CD4-positive, alpha-beta memory T cell (primary cell): ENCODE measurements at regions of chr1 and their contacts with region 1.

Region 1: GRCh38 chr1:235415008-235415904 is 48.0 kb downstream of the TBCE start:
- DNase-seq: peak; percentile 53 to 64 (median 61)
- H3K4me3 ChIP-seq: no peak overlapping the region
- H3K4me3 Mint-ChIP-seq: no peak overlapping the region
- H3K27ac ChIP-seq: no peak overlapping the region
- H3K27ac Mint-ChIP-seq: peak overlapping the region in 1 of 7 donors; percentile 8
- H3K4me1 ChIP-seq: no peaks in the 10 kb centered on the region
- H3K4me1 Mint-ChIP-seq: peaks cover 6 to 11% (median 9%) of the 10 kb centered on the region in 4 donors
- H3K27me3 ChIP-seq: no peaks in the 10 kb centered on the region
- H3K27me3 Mint-ChIP-seq: no peaks in the 10 kb centered on the region

Region 2: GRCh38 chr1:234486498-234487448 is 928.5 kb before region 1 on chr1:
- CTCF ChIA-PET with region 1: interaction called, 14 read pairs
- POLR2A ChIA-PET with region 1: no interaction called
- intact Hi-C with region 1: no loop called
- DNase-seq: peak in 2 of 5 donors; percentile 13 to 20
- H3K4me3 ChIP-seq: no peak overlapping the region
- H3K4me3 Mint-ChIP-seq: peak overlapping the region in 3 of 8 donors; percentile 18 to 31 (median 20)
- H3K27ac ChIP-seq: no peak overlapping the region
- H3K27ac Mint-ChIP-seq: peak overlapping the region in 1 of 7 donors; percentile 22
- H3K4me1 ChIP-seq: peaks cover 10% of the 10 kb centered on the region
- H3K4me1 Mint-ChIP-seq: peaks cover 5 to 23% (median 6%) of the 10 kb centered on the region in 4 donors
- H3K27me3 ChIP-seq: no peaks in the 10 kb centered on the region
- H3K27me3 Mint-ChIP-seq: peaks cover 5 to 13% of the 10 kb centered on the region in 2 donors

Region 3: GRCh38 chr1:235093696-235094592 is 321.3 kb before region 1 on chr1:
- CTCF ChIA-PET with region 1: interaction called, 96 read pairs
- POLR2A ChIA-PET with region 1: no interaction called
- intact Hi-C with region 1: loop called (anchors 1 kb)
- DNase-seq: peak; percentile 77 to 80 (median 79)
- H3K4me3 ChIP-seq: no peak overlapping the region
- H3K4me3 Mint-ChIP-seq: peak overlapping the region in 1 of 8 donors; percentile 39
- H3K27ac ChIP-seq: no peak overlapping the region
- H3K27ac Mint-ChIP-seq: peak overlapping the region in 3 of 7 donors; percentile 14 to 71 (median 29)
- H3K4me1 ChIP-seq: peaks cover 9% of the 10 kb centered on the region
- H3K4me1 Mint-ChIP-seq: peaks cover 6 to 10% (median 7%) of the 10 kb centered on the region in 4 donors
- H3K27me3 ChIP-seq: no peaks in the 10 kb centered on the region
- H3K27me3 Mint-ChIP-seq: peaks cover 0 to 5% of the 10 kb centered on the region in 2 donors

Region 4: DNA sequence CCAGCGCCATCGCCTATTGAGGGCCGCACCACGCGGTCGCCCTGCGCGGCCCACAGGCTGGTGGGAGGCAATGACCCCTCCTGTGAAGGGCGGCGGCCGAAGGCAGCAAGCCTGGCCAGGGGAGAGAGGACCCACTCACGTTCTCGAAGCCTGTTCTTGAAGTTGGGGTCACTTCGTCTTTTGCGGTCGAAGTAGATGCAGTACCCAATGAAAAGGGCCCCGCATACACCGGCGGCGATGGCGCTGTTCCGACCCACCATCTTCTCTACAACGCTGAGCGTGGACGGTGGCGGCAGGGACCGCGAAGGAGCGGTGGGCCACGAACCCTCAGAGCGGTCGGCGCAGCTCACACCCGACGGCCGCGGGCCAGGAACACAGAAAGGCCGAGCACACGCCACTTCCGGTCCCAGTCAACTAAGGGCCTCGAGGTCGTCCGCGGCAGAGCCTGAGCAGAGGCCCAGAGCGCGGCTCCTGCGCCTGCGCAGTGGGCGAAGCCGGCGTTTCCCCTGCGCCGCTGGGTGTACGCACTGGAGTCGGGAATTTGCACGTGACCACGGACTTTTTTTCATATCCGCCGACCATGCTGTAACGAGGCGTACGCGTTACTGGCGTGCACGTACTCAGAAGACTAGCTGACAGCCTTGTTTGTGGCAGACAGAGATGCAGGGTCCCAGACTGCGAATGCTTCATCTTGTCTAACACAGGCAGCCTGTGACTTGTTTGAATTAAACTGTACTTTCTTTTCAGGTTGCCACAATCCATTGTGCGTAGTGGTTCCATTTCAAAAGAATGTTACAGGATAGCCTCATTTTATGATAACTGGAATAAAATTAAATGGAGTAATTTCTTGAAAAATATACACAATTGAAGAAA is 286.6 kb before region 1 on chr1 and contains the start of gene TOMM20:
- CTCF ChIA-PET with region 1: interaction called, 13 read pairs
- POLR2A ChIA-PET with region 1: interaction called, 3 read pairs
- intact Hi-C with region 1: no loop called
- DNase-seq: peak; percentile 95 to 97 (median 96)
- H3K4me3 ChIP-seq: peak within 1 kb of the TSS; percentile 64 to 83
- H3K4me3 Mint-ChIP-seq: peak within 1 kb of the TSS; percentile 89 to 98 (median 97)
- H3K27ac ChIP-seq: peak within 1 kb of the TSS; percentile 94
- H3K27ac Mint-ChIP-seq: peak within 1 kb of the TSS; percentile 95 to 99 (median 97)
- H3K4me1 ChIP-seq: peaks cover 41% of the 10 kb centered on the region
- H3K4me1 Mint-ChIP-seq: peaks cover 19 to 51% (median 32%) of the 10 kb centered on the region in 4 donors
- H3K27me3 ChIP-seq: no peaks in the 10 kb centered on the region
- H3K27me3 Mint-ChIP-seq: no peaks in the 10 kb centered on the region
- total RNA-seq, gene TOMM20: 102 to 108 TPM

Region 5: GRCh38 chr1:235206533-235207208 is 208.6 kb before region 1 on chr1:
- CTCF ChIA-PET with region 1: interaction called, 10 read pairs
- POLR2A ChIA-PET with region 1: no interaction called
- intact Hi-C with region 1: no loop called
- DNase-seq: peak in 3 of 5 donors; percentile 4 to 52 (median 20)
- H3K4me3 ChIP-seq: no peak overlapping the region
- H3K4me3 Mint-ChIP-seq: peak overlapping the region in 7 of 8 donors; percentile 1 to 67 (median 59)
- H3K27ac ChIP-seq: peak overlapping the region; percentile 20
- H3K27ac Mint-ChIP-seq: peak overlapping the region; percentile 25 to 91 (median 65)
- H3K4me1 ChIP-seq: peaks cover 19% of the 10 kb centered on the region
- H3K4me1 Mint-ChIP-seq: peaks cover 19 to 31% (median 25%) of the 10 kb centered on the region in 4 donors
- H3K27me3 ChIP-seq: no peaks in the 10 kb centered on the region
- H3K27me3 Mint-ChIP-seq: no peaks in the 10 kb centered on the region

Region 6: DNA sequence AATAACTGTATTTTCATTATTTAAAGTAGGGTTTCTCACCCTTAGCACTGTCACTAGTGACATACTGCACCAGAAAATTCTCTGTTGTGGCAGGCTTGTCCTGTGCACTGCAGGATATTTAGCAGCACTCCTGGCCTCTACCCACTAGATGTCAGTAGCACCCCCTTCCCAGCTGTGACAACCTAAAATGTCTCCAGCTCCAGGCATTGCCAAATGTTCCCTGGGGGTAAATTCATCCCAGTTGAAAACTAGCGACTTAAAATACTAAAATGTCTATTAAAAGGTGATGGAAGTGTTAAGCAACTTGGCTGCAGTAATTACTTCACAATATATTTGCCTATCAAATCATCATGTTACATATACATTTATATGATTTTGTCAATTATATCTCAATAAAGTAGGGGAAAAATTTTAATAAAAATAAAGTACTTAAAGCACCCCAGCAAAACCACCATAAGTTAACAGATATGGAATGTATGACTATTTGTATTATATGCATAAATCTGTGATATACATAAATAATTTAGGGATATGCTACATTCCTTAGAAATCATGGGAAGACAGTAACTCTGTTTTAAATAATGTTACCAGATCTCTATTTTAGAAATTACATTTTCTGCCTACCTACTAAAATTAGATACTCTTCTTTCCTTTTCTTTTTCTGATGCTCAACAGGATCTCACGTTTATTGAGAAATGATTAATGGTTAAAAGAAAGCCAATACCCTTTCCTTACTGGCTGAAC is 161.9 kb before region 1 on chr1:
- CTCF ChIA-PET with region 1: interaction called, 130 read pairs
- POLR2A ChIA-PET with region 1: interaction called, 9 read pairs
- intact Hi-C with region 1: loop called (anchors 1 kb)
- DNase-seq: peak; percentile 58 to 71 (median 66)
- H3K4me3 ChIP-seq: no peak overlapping the region
- H3K4me3 Mint-ChIP-seq: no peak overlapping the region
- H3K27ac ChIP-seq: no peak overlapping the region
- H3K27ac Mint-ChIP-seq: peak overlapping the region; percentile 35 to 86 (median 70)
- H3K4me1 ChIP-seq: peaks cover 36% of the 10 kb centered on the region
- H3K4me1 Mint-ChIP-seq: peaks cover 24 to 46% (median 30%) of the 10 kb centered on the region in 4 donors
- H3K27me3 ChIP-seq: no peaks in the 10 kb centered on the region
- H3K27me3 Mint-ChIP-seq: no peaks in the 10 kb centered on the region

Region 7: DNA sequence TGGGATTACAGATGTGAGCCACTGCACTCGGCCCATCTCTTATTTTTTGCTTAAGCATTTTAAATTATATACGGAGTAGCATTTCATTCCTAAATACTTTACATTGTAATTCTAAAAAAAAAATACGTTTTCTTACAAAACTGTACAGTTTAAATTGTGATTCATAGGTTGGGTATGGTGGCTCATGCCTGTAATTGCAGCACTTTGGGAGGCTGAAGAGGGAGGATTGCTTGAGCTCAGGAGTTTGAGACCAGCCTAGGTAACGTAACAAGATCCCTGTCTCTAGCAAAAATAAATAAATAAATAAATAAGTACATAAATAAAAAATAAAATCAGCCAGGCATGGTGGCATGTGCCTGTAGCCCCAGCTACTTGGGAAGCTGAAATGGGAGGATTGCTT is 23.4 kb before region 1 on chr1:
- CTCF ChIA-PET with region 1: interaction called, 10 read pairs
- POLR2A ChIA-PET with region 1: no interaction called
- intact Hi-C with region 1: no loop called
- DNase-seq: no peak
- H3K4me3 ChIP-seq: no peak overlapping the region
- H3K4me3 Mint-ChIP-seq: no peak overlapping the region
- H3K27ac ChIP-seq: no peak overlapping the region
- H3K27ac Mint-ChIP-seq: no peak overlapping the region
- H3K4me1 ChIP-seq: no peaks in the 10 kb centered on the region
- H3K4me1 Mint-ChIP-seq: peaks cover 2 to 10% (median 5%) of the 10 kb centered on the region in 4 donors
- H3K27me3 ChIP-seq: no peaks in the 10 kb centered on the region
- H3K27me3 Mint-ChIP-seq: no peaks in the 10 kb centered on the region

Region 8: GRCh38 chr1:235455823-235456222 is 40.6 kb after region 1 on chr1:
- CTCF ChIA-PET with region 1: no interaction called
- POLR2A ChIA-PET with region 1: no interaction called
- intact Hi-C with region 1: no loop called
- DNase-seq: no peak
- H3K4me3 ChIP-seq: no peak overlapping the region
- H3K4me3 Mint-ChIP-seq: no peak overlapping the region
- H3K27ac ChIP-seq: no peak overlapping the region
- H3K27ac Mint-ChIP-seq: no peak overlapping the region
- H3K4me1 ChIP-seq: no peaks in the 10 kb centered on the region
- H3K4me1 Mint-ChIP-seq: no peaks in the 10 kb centered on the region
- H3K27me3 ChIP-seq: no peaks in the 10 kb centered on the region
- H3K27me3 Mint-ChIP-seq: no peaks in the 10 kb centered on the region

Region 9: GRCh38 chr1:235483090-235483489 is 67.8 kb after region 1 on chr1:
- CTCF ChIA-PET with region 1: no interaction called
- POLR2A ChIA-PET with region 1: no interaction called
- intact Hi-C with region 1: no loop called
- DNase-seq: no peak
- H3K4me3 ChIP-seq: no peak overlapping the region
- H3K4me3 Mint-ChIP-seq: no peak overlapping the region
- H3K27ac ChIP-seq: no peak overlapping the region
- H3K27ac Mint-ChIP-seq: peak overlapping the region in 1 of 7 donors; percentile 35
- H3K4me1 ChIP-seq: no peaks in the 10 kb centered on the region
- H3K4me1 Mint-ChIP-seq: peaks cover 0 to 3% (median 0%) of the 10 kb centered on the region in 4 donors
- H3K27me3 ChIP-seq: no peaks in the 10 kb centered on the region
- H3K27me3 Mint-ChIP-seq: no peaks in the 10 kb centered on the region

Region 10: GRCh38 chr1:235557495-235557894 is 142.2 kb after region 1 on chr1:
- CTCF ChIA-PET with region 1: no interaction called
- POLR2A ChIA-PET with region 1: no interaction called
- intact Hi-C with region 1: no loop called
- DNase-seq: no peak
- H3K4me3 ChIP-seq: no peak overlapping the region
- H3K4me3 Mint-ChIP-seq: no peak overlapping the region
- H3K27ac ChIP-seq: no peak overlapping the region
- H3K27ac Mint-ChIP-seq: no peak overlapping the region
- H3K4me1 ChIP-seq: no peaks in the 10 kb centered on the region
- H3K4me1 Mint-ChIP-seq: peaks cover 0 to 1% (median 0%) of the 10 kb centered on the region in 4 donors
- H3K27me3 ChIP-seq: no peaks in the 10 kb centered on the region
- H3K27me3 Mint-ChIP-seq: no peaks in the 10 kb centered on the region

Region 11: GRCh38 chr1:235583511-235584001 is 168.3 kb after region 1 on chr1:
- CTCF ChIA-PET with region 1: no interaction called
- POLR2A ChIA-PET with region 1: no interaction called
- intact Hi-C with region 1: no loop called
- DNase-seq: no peak
- H3K4me3 ChIP-seq: no peak overlapping the region
- H3K4me3 Mint-ChIP-seq: no peak overlapping the region
- H3K27ac ChIP-seq: no peak overlapping the region
- H3K27ac Mint-ChIP-seq: no peak overlapping the region
- H3K4me1 ChIP-seq: no peaks in the 10 kb centered on the region
- H3K4me1 Mint-ChIP-seq: no peaks in the 10 kb centered on the region
- H3K27me3 ChIP-seq: no peaks in the 10 kb centered on the region
- H3K27me3 Mint-ChIP-seq: peaks cover 4 to 12% of the 10 kb centered on the region in 2 donors